ENCODE measurements at regions of chr2 and their contacts with region 1.

Region 1: DNA sequence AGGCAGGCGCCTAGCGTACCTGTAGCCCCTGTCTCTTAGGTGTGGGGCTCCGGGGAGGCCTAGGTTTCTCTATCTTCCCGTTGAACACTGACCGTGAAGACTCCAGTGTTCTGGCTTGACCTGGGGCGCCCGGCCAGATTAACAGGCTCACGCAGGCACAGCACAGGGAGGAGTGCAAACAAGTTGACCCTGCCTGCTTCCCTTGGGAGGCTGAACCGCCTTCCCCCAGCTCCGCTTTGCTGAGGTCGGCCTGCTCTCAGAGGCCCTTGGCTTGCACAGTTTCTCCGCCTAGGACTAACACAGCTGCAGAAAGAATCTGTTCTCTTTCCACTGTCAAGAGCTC is 566 bp downstream of the PCYOX1 start:
- DNase-seq: peak; percentile 22

Region 2: GRCh38 chr2:69514406-69514805 is 744.1 kb before region 1 on chr2:
- CTCF ChIA-PET with region 1: no interaction called
- POLR2A ChIA-PET with region 1: no interaction called
- DNase-seq: no peak

Region 3: GRCh38 chr2:70190418-70191243 is 67.9 kb before region 1 on chr2 and contains the start of gene C2orf42:
- CTCF ChIA-PET with region 1: no interaction called
- POLR2A ChIA-PET with region 1: interaction called, 12 read pairs
- DNase-seq: peak; percentile 94

Region 4: DNA sequence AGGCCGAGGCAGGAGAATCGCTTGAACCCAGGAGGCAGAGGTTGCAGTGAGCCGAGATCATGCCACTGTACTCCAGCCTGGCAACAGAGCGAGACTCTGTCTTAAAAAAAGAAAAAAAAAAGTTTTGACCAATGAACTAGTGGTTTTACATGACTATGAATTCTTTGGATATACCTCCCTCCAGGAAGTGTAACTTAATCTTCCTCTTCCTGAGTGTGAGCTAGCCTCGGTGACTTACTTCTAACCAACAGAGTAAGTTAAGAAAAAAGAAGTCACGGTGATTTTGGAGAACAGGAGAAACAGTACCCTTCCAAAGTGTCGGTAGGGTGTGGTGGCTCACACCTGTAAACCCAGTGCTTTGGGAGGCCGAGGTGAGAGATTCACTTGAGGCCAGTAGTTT is 17.2 kb before region 1 on chr2:
- CTCF ChIA-PET with region 1: no interaction called
- POLR2A ChIA-PET with region 1: interaction called, 10 read pairs
- DNase-seq: no peak

Region 5: GRCh38 chr2:70248181-70248847 is 10.2 kb before region 1 on chr2 and contains the start of gene TIA1:
- CTCF ChIA-PET with region 1: interaction called, 9 read pairs
- POLR2A ChIA-PET with region 1: interaction called, 14 read pairs
- DNase-seq: peak; percentile 97